ENCODE measurements at regions of chr5 and their contacts with region 1.

Region 1: DNA sequence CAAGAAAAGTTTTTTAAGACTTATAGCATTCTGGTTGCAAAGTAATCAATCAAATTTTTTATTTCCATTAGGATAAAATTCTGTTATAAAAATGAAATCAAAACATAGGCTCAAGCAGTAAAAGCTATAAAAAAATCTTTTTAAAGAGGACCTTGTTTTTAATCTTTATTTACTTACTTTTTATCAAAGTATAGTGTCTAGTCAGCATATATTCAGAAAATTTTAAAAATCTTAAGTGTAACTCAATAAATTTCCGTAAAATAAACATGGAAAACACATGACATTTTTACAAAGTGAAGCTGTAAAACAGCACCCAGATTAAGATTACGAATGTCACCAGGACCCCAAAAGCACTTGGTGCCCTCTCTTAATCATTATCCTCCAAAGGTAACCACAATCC is 302.4 kb downstream of the TMEM161B start:
- DNase-seq: no peak
- ATAC-seq: no peak
- H3K4me3 ChIP-seq: no peak overlapping the region
- H3K27ac ChIP-seq: no peak overlapping the region
- H3K4me1 ChIP-seq: no peaks in the 10 kb centered on the region
- H3K27me3 ChIP-seq: no peaks in the 10 kb centered on the region
- CTCF ChIP-seq: no peak

Region 2: DNA sequence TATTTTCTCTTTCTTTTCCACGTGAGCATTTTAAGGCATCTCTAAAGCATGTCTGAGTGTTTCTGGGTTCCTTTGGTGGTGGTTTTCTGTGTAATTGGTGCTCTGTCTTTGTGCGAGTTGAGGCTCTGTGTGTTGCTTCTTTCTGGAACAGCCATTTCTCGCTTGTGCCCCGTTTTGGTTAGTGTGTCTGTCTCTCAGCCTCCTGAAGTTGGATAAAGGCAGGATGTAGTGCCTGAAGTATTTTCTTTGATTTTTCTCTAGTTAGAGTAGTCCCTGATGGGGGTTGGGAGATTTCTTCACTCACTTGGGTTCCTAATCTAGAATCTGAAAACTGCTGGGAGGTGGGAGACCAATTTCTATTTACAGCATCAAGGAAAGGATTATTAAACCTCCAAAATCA is 432.1 kb after region 1 on chr5:
- CTCF ChIA-PET with region 1: no interaction called
- POLR2A ChIA-PET with region 1: interaction called, 12 read pairs
- in situ Hi-C with region 1: no loop called
- intact Hi-C with region 1: no loop called
- DNase-seq: no peak
- ATAC-seq: no peak
- H3K4me3 ChIP-seq: no peak overlapping the region
- H3K27ac ChIP-seq: no peak overlapping the region
- H3K4me1 ChIP-seq: no peaks in the 10 kb centered on the region
- H3K27me3 ChIP-seq: no peaks in the 10 kb centered on the region
- CTCF ChIP-seq: no peak

Measured in Panc1 (cell line).